ENCODE measurements at regions of chr2 and their contacts with region 1.

Region 1: GRCh38 chr2:43226558-43226954 is at the start of gene ZFP36L2:
- DNase-seq: peak; percentile 93
- ATAC-seq: peak; percentile 73
- H3K4me3 ChIP-seq: peak within 1 kb of the TSS; percentile 87
- H3K27ac ChIP-seq: peak within 1 kb of the TSS; percentile 96
- H3K4me1 ChIP-seq: peaks cover 8% of the 10 kb centered on the region
- H3K27me3 ChIP-seq: no peaks in the 10 kb centered on the region
- CTCF ChIP-seq: peak; percentile 19; the same call in 1 of the 2 replicates
- POLR2A ChIP-seq: peak; percentile 97
- RAD21 ChIP-seq: peak; percentile 14; the same call in 1 of the 2 replicates
- total RNA-seq, gene ZFP36L2: 1.8 and 2.2 TPM in 2 replicates

Region 2: GRCh38 chr2:42944779-42945415 is 281.7 kb before region 1 on chr2:
- CTCF ChIA-PET with region 1: interaction called, 12 read pairs
- POLR2A ChIA-PET with region 1: no interaction called
- dilution Hi-C with region 1: no loop called
- in situ Hi-C with region 1: no loop called
- intact Hi-C with region 1: loop called (anchors 1 kb)
- DNase-seq: peak; percentile 57
- ATAC-seq: peak; percentile 46; the same call in 1 of the 2 replicates
- H3K4me3 ChIP-seq: no peak overlapping the region
- H3K27ac ChIP-seq: no peak overlapping the region
- H3K4me1 ChIP-seq: no peaks in the 10 kb centered on the region; the same call in 1 of the 2 replicates
- H3K27me3 ChIP-seq: no peaks in the 10 kb centered on the region
- CTCF ChIP-seq: no peak
- POLR2A ChIP-seq: no peak
- RAD21 ChIP-seq: no peak

Region 3: DNA sequence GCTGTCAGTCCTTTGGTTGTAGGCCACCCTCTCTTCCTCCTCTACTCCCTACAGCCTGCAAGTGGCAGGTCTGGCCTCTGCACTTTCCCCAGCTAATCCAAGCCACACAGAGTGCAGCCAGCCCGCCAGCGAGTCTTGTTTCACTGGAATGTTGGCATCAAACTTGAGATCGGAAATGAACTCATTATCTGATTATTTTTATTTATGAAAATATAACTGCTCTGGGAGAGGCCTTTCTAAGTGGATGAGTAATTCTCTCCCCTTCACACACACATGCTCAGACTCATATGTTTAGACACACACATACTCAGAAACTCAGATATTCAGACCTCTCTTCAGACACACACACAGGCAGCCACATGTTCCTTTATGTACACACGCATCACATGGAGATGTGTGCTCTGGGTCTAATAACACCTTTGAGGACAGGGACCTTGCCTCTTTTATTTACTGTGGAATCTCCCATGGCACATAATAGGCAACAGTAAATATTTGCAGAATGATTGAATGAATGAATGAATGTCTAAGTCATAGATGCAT is 151.4 kb before region 1 on chr2:
- CTCF ChIA-PET with region 1: no interaction called
- POLR2A ChIA-PET with region 1: no interaction called
- dilution Hi-C with region 1: no loop called
- in situ Hi-C with region 1: loop called (anchors 10 kb)
- intact Hi-C with region 1: loop called (anchors 1 kb)
- DNase-seq: peak; percentile 99
- ATAC-seq: peak; percentile 86
- H3K4me3 ChIP-seq: no peak overlapping the region
- H3K27ac ChIP-seq: peak overlapping the region; percentile 100
- H3K4me1 ChIP-seq: peaks cover 49% of the 10 kb centered on the region
- H3K27me3 ChIP-seq: no peaks in the 10 kb centered on the region
- CTCF ChIP-seq: peak; percentile 33
- POLR2A ChIP-seq: no peak; the same call in 1 of the 2 replicates
- RAD21 ChIP-seq: peak; percentile 49

Region 4: GRCh38 chr2:43194121-43194869 is 32.3 kb before region 1 on chr2:
- CTCF ChIA-PET with region 1: no interaction called
- POLR2A ChIA-PET with region 1: no interaction called
- dilution Hi-C with region 1: no loop called
- in situ Hi-C with region 1: no loop called
- intact Hi-C with region 1: no loop called
- DNase-seq: no peak
- ATAC-seq: no peak
- H3K4me3 ChIP-seq: no peak overlapping the region
- H3K27ac ChIP-seq: no peak overlapping the region
- H3K4me1 ChIP-seq: no peaks in the 10 kb centered on the region; the same call in 1 of the 2 replicates
- H3K27me3 ChIP-seq: no peaks in the 10 kb centered on the region
- CTCF ChIP-seq: no peak
- POLR2A ChIP-seq: no peak
- RAD21 ChIP-seq: no peak

Region 5: DNA sequence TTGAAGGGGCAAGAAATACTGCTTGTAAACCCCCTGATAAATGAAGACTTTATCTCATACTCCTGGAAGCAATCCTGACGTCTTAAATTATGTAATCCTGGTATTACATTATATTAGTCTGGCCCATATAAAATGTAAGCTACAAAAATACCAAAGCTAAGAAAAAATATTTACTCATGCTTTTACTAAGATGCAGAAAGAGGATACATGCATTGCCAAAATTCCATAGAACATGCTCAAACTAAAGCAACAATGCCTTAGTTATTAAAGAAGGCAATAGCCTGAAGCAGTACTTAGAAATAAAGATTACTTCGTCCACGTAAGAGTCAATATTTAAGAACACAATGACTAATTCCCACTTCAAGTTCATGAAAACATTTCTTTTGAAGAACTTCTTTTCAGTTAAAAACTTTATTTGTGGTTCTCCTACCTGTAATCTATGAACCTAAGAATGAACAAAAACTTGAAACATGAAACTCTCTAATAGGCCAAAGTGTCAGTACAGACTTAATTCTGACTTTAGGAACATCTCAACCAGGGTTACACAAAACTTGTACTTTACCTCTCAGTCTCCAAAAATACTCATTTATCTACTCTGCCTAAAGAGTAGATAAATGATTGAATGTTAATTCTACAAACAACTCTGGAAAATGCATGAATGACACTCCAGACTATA is 252.0 kb after region 1 on chr2:
- CTCF ChIA-PET with region 1: interaction called, 3 read pairs
- POLR2A ChIA-PET with region 1: interaction called, 10 read pairs
- dilution Hi-C with region 1: no loop called
- in situ Hi-C with region 1: loop called (anchors 5 kb)
- intact Hi-C with region 1: no loop called
- DNase-seq: peak; percentile 43
- ATAC-seq: peak; percentile 64
- H3K4me3 ChIP-seq: no peak overlapping the region
- H3K27ac ChIP-seq: no peak overlapping the region
- H3K4me1 ChIP-seq: 0 out of 2 replicates have a peak, but pooled peaks cover 4% of the 10 kb centered on the region
- H3K27me3 ChIP-seq: no peaks in the 10 kb centered on the region
- CTCF ChIP-seq: no peak
- POLR2A ChIP-seq: no peak
- RAD21 ChIP-seq: no peak

Region 6: GRCh38 chr2:43542285-43542937 is 315.9 kb after region 1 on chr2:
- CTCF ChIA-PET with region 1: interaction called, 3 read pairs
- POLR2A ChIA-PET with region 1: no interaction called
- dilution Hi-C with region 1: no loop called
- in situ Hi-C with region 1: no loop called
- intact Hi-C with region 1: loop called (anchors 2 kb)
- DNase-seq: peak; percentile 68
- ATAC-seq: peak; percentile 77
- H3K4me3 ChIP-seq: no peak overlapping the region
- H3K27ac ChIP-seq: no peak overlapping the region
- H3K4me1 ChIP-seq: peaks cover 7% of the 10 kb centered on the region
- H3K27me3 ChIP-seq: no peaks in the 10 kb centered on the region
- CTCF ChIP-seq: peak; percentile 58
- POLR2A ChIP-seq: no peak
- RAD21 ChIP-seq: peak; percentile 72

Measured in IMR-90 (cell line).